ENCODE measurements at regions of chr5 and their contacts with region 1.

Region 1: DNA sequence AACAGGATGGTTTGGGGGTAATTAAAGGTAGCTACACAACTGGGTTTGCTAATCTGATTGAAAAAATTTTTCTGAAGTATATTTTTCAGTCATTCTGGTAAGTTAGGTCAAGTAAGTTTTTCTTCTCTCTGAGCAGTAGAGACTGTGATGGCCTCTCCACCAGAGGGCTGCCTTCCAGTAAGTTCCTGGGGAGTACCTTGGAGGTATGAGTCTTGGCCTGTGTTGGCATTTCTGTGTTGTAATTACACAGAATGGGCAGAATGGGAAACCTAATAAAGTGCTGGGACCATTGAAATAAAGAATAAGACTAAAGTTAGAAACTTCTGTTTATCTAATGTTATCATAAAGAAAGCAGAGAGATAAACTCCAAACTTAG is 430.8 kb downstream of the ARHGEF28 start:
- DNase-seq: peak; percentile 33
- ATAC-seq: peak; percentile 48; the same call in 1 of the 2 replicates
- H3K4me3 ChIP-seq: no peak overlapping the region
- H3K27ac ChIP-seq: no peak overlapping the region
- H3K4me1 ChIP-seq: 0 out of 2 replicates have a peak, but pooled peaks cover 2% of the 10 kb centered on the region
- H3K27me3 ChIP-seq: peaks cover 6% of the 10 kb centered on the region
- CTCF ChIP-seq: peak; percentile 33
- POLR2A ChIP-seq: no peak
- RAD21 ChIP-seq: peak; percentile 40

Region 2: GRCh38 chr5:73962801-73963425 is 93.9 kb before region 1 on chr5:
- CTCF ChIA-PET with region 1: no interaction called
- POLR2A ChIA-PET with region 1: no interaction called
- dilution Hi-C with region 1: no loop called
- in situ Hi-C with region 1: no loop called
- intact Hi-C with region 1: no loop called
- DNase-seq: no peak
- ATAC-seq: no peak
- H3K4me3 ChIP-seq: no peak overlapping the region
- H3K27ac ChIP-seq: no peak overlapping the region
- H3K4me1 ChIP-seq: no peaks in the 10 kb centered on the region
- H3K27me3 ChIP-seq: peaks cover 9% of the 10 kb centered on the region
- CTCF ChIP-seq: no peak
- POLR2A ChIP-seq: no peak
- RAD21 ChIP-seq: no peak

Region 3: GRCh38 chr5:73998489-73998888 is 58.3 kb before region 1 on chr5:
- CTCF ChIA-PET with region 1: no interaction called
- POLR2A ChIA-PET with region 1: no interaction called
- dilution Hi-C with region 1: no loop called
- in situ Hi-C with region 1: no loop called
- intact Hi-C with region 1: loop called (anchors 10 kb)
- DNase-seq: no peak
- ATAC-seq: no peak
- H3K4me3 ChIP-seq: no peak overlapping the region
- H3K27ac ChIP-seq: no peak overlapping the region
- H3K4me1 ChIP-seq: no peaks in the 10 kb centered on the region
- H3K27me3 ChIP-seq: peaks cover 23% of the 10 kb centered on the region
- CTCF ChIP-seq: no peak
- POLR2A ChIP-seq: no peak
- RAD21 ChIP-seq: no peak